Activated CD4-positive, alpha-beta memory T cell treated with anti-CD3 and anti-CD28 coated beads for 36 hours (primary cell): ENCODE measurements at regions of chr11 and their contacts with region 1.

Region 1: DNA sequence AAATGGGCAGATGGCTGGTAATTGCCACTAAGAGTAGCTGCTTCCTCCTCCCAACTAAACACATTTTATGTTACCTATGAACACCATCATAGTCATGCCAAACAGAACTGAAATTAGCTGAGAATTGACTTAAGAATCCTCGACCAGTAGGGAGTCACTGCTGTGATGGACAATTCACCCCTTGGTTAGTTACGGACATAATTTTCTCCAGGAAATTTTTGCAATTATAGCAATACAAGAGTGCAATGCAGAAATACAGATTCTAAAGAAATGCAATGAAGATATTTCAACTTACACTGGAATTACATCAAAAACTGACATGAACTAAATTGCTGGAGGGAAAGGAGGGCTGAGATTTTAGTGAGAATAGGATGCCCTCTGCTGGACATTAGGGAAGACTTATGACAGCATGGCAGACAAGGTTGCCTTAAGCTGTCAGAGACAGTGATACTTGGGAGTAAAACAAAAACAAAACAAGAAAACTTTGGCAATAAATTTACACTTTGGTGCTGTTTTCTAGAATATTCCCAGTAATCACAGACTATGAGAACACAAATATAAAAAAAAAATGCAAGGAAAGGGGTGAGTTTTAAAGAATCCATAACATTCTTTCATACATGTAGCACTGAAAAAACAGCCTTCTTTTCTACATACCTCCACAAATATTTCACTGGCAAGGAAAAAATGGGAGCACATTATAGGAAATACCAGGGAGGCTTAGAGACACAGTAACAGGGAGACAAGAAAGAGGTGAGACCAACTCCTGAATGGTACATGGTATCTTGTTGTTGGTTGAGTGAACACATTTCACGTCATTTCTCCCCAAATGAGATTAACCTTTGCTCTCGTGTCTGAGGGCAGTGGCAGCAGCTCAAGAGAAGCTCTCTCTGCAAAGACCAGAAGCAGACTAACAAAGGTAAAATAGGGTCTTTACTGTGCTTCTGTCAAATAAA is 11.2 kb upstream of the PPP2R1B start:
- DNase-seq: no peak
- H3K4me3 Mint-ChIP-seq: no peak overlapping the region
- H3K27ac Mint-ChIP-seq: no peak overlapping the region
- H3K4me1 Mint-ChIP-seq: no peaks in the 10 kb centered on the region
- H3K27me3 Mint-ChIP-seq: no peaks in the 10 kb centered on the region

Region 2: GRCh38 chr11:111408789-111409727 is 368.3 kb before region 1 on chr11:
- CTCF ChIA-PET with region 1: no interaction called
- POLR2A ChIA-PET with region 1: no interaction called
- intact Hi-C with region 1: no loop called
- DNase-seq: peak; percentile 18
- H3K4me3 Mint-ChIP-seq: no peak overlapping the region
- H3K27ac Mint-ChIP-seq: no peak overlapping the region
- H3K4me1 Mint-ChIP-seq: peaks cover 31% of the 10 kb centered on the region
- H3K27me3 Mint-ChIP-seq: no peaks in the 10 kb centered on the region

Region 3: GRCh38 chr11:111454561-111455192 is 322.7 kb before region 1 on chr11:
- CTCF ChIA-PET with region 1: interaction called, 6 read pairs
- POLR2A ChIA-PET with region 1: no interaction called
- intact Hi-C with region 1: loop called (anchors 2 kb)
- DNase-seq: peak; percentile 78
- H3K4me3 Mint-ChIP-seq: no peak overlapping the region
- H3K27ac Mint-ChIP-seq: no peak overlapping the region
- H3K4me1 Mint-ChIP-seq: no peaks in the 10 kb centered on the region
- H3K27me3 Mint-ChIP-seq: peaks cover 11% of the 10 kb centered on the region

Region 4: GRCh38 chr11:111565114-111565720 is 212.2 kb before region 1 on chr11:
- CTCF ChIA-PET with region 1: interaction called, 25 read pairs
- POLR2A ChIA-PET with region 1: no interaction called
- intact Hi-C with region 1: loop called (anchors 1 kb)
- DNase-seq: peak; percentile 70
- H3K4me3 Mint-ChIP-seq: no peak overlapping the region
- H3K27ac Mint-ChIP-seq: no peak overlapping the region
- H3K4me1 Mint-ChIP-seq: no peaks in the 10 kb centered on the region
- H3K27me3 Mint-ChIP-seq: no peaks in the 10 kb centered on the region

Region 5: DNA sequence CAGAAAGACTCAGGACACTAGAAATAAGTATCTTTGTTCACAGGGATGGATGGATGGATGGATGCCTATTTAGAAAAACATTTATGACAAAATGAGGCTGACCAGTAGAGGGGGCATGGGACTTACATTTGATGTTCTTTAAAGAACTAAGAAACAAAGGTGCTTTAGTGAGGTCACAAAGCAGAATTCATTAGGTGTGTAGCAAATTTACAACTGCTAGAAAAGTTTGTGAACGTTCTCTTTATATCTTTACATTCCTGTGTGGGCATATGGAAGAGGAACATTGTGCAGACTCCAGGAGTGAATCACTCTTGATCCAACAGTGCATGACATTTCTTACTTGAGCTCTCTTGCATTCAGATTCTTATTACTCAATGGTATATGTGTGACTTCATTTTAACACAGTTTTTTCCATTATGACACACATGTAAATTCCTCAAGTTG is 191.0 kb before region 1 on chr11:
- CTCF ChIA-PET with region 1: interaction called, 101 read pairs
- POLR2A ChIA-PET with region 1: interaction called, 5 read pairs
- intact Hi-C with region 1: loop called (anchors 1 kb)
- DNase-seq: peak; percentile 35
- H3K4me3 Mint-ChIP-seq: no peak overlapping the region
- H3K27ac Mint-ChIP-seq: no peak overlapping the region
- H3K4me1 Mint-ChIP-seq: no peaks in the 10 kb centered on the region
- H3K27me3 Mint-ChIP-seq: no peaks in the 10 kb centered on the region

Region 6: GRCh38 chr11:111718436-111718835 is 58.9 kb before region 1 on chr11:
- CTCF ChIA-PET with region 1: no interaction called
- POLR2A ChIA-PET with region 1: no interaction called
- intact Hi-C with region 1: no loop called
- DNase-seq: no peak
- H3K4me3 Mint-ChIP-seq: no peak overlapping the region
- H3K27ac Mint-ChIP-seq: no peak overlapping the region
- H3K4me1 Mint-ChIP-seq: no peaks in the 10 kb centered on the region
- H3K27me3 Mint-ChIP-seq: no peaks in the 10 kb centered on the region

Region 7: GRCh38 chr11:111788051-111788450 is 10.7 kb after region 1 on chr11:
- CTCF ChIA-PET with region 1: interaction called, 17 read pairs
- POLR2A ChIA-PET with region 1: no interaction called
- intact Hi-C with region 1: no loop called
- DNase-seq: no peak
- H3K4me3 Mint-ChIP-seq: no peak overlapping the region
- H3K27ac Mint-ChIP-seq: no peak overlapping the region
- H3K4me1 Mint-ChIP-seq: no peaks in the 10 kb centered on the region
- H3K27me3 Mint-ChIP-seq: no peaks in the 10 kb centered on the region

Region 8: GRCh38 chr11:111841370-111842053 is 64.1 kb after region 1 on chr11:
- CTCF ChIA-PET with region 1: interaction called, 35 read pairs
- POLR2A ChIA-PET with region 1: no interaction called
- intact Hi-C with region 1: loop called (anchors 1 kb)
- DNase-seq: peak; percentile 91
- H3K4me3 Mint-ChIP-seq: no peak overlapping the region
- H3K27ac Mint-ChIP-seq: no peak overlapping the region
- H3K4me1 Mint-ChIP-seq: peaks cover 11% of the 10 kb centered on the region
- H3K27me3 Mint-ChIP-seq: no peaks in the 10 kb centered on the region

Region 9: DNA sequence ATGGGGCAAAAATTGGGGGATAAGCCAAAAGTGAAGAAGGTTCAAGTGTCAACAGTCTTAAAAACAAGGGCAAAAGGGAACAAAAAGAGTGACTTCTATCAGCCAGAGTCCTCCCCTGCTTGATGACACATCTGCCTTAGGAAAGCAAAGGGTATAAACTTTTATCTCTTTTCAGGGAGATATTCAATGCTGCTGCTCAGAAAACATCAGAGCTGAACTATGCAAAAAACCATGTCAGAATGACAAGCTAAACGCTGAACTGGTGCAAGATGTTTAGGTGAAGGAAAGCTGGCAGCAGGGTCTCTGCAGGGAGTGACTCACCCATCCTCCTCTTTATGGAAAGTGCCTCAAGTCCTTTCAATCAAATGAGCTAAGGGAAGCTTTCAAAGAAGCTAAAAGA is 69.3 kb after region 1 on chr11:
- CTCF ChIA-PET with region 1: interaction called, 35 read pairs
- POLR2A ChIA-PET with region 1: no interaction called
- intact Hi-C with region 1: loop called (anchors 1 kb)
- DNase-seq: no peak
- H3K4me3 Mint-ChIP-seq: no peak overlapping the region
- H3K27ac Mint-ChIP-seq: no peak overlapping the region
- H3K4me1 Mint-ChIP-seq: no peaks in the 10 kb centered on the region
- H3K27me3 Mint-ChIP-seq: no peaks in the 10 kb centered on the region

Region 10: DNA sequence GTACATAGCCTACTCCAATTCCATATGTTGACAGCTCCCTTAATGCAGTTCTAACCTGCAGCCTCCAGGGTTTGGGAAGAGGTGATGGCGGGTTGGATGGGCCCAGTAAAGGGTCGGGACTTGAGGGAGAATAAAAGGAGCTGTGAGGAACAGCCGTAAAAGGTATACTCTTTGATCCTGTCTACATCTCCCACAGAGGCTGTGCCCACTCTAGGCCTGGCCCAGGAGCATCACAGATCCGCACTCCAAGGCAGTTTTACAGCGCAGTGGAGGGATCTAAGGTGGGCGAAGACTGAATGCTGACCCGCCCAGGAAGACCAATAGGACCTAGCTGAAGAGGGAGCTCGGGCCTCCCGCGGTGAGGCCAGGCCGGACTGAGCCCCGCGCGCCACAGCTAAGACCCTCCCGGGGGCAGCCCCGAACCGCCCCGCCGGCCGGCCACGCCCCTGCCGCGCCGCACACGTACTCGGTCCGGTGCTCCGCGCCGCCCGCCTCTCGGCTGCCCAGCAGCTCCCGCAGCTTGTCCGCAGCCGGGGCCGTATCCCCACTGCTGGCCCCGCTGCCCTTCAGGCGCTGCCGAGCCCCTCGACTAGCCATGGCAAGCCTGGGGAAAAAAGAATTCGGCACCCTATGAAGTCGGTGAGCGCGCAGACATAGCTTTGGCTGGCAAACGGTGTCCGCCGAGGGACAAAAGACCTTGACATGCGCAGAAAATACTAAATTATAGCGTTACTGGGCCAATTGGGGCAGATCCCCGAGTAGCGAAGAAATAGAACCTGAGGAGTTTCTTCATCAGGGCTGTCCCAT is 93.7 kb after region 1 on chr11 and contains the start of gene ALG9:
- CTCF ChIA-PET with region 1: no interaction called
- POLR2A ChIA-PET with region 1: no interaction called
- intact Hi-C with region 1: no loop called
- DNase-seq: peak; percentile 92
- H3K4me3 Mint-ChIP-seq: peak within 1 kb of the TSS; percentile 92
- H3K27ac Mint-ChIP-seq: peak within 1 kb of the TSS; percentile 86
- H3K4me1 Mint-ChIP-seq: peaks cover 24% of the 10 kb centered on the region
- H3K27me3 Mint-ChIP-seq: no peaks in the 10 kb centered on the region
- total RNA-seq, gene ALG9: 23.6 to 26.7 TPM